CD4-positive, alpha-beta memory T cell (primary cell): ENCODE measurements at regions of chr6 and their contacts with region 1.

Region 1: DNA sequence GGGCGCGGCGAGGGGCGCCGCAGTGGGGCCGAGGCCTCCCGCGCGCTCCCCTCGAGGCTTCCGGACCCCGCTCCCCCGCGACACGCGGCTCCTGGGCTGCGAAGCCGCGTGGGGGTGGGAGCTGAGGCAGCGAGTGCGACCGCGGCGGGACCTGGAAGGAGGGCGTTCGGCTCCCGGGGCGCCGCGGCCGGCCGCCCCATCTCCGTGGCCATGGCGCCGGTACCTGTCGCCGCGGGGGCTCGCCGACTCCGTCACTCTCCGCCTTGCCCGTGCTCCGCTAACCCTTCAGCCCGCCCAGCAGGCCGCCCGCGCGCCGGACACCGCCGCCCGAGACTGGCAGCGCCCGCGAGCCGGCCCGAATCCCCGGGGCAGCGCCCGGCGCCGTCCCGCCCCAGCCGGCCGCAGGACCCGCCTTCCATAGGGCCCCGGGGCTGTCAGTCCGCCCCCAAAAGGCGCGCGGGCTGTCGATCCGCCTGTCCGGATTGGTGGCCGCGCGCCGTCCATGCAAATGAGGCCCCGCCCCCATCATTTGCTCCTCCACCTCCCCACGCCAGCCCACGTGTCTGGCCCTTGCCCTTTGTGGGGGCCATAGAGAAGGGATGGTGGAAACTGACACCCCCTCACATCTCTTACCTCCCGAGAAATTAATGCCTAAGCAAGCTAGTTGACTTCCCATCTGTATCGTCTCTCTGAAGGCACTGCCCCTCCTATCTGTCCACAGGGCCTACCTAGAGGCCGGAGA is at the start of gene FKBP5:
- DNase-seq: peak; percentile 83 to 87 (median 85)
- H3K4me3 ChIP-seq: peak within 1 kb of the TSS; percentile 51 to 99
- H3K4me3 Mint-ChIP-seq: peak within 1 kb of the TSS; percentile 96 to 100 (median 100)
- H3K27ac ChIP-seq: peak within 1 kb of the TSS; percentile 85
- H3K27ac Mint-ChIP-seq: peak within 1 kb of the TSS; percentile 93 to 98 (median 95)
- H3K4me1 ChIP-seq: peaks cover 22% of the 10 kb centered on the region
- H3K4me1 Mint-ChIP-seq: peaks cover 4 to 30% (median 10%) of the 10 kb centered on the region in 4 donors
- H3K27me3 ChIP-seq: no peaks in the 10 kb centered on the region
- H3K27me3 Mint-ChIP-seq: no peaks in the 10 kb centered on the region
- total RNA-seq, gene FKBP5: 72.9 to 74.2 TPM

Region 2: GRCh38 chr6:35435074-35435837 is 253.5 kb before region 1 on chr6:
- CTCF ChIA-PET with region 1: no interaction called
- POLR2A ChIA-PET with region 1: no interaction called
- intact Hi-C with region 1: no loop called
- DNase-seq: no peak
- H3K4me3 ChIP-seq: no peak overlapping the region
- H3K4me3 Mint-ChIP-seq: no peak overlapping the region
- H3K27ac ChIP-seq: no peak overlapping the region
- H3K27ac Mint-ChIP-seq: no peak overlapping the region
- H3K4me1 ChIP-seq: no peaks in the 10 kb centered on the region
- H3K4me1 Mint-ChIP-seq: no peaks in the 10 kb centered on the region
- H3K27me3 ChIP-seq: no peaks in the 10 kb centered on the region
- H3K27me3 Mint-ChIP-seq: no peaks in the 10 kb centered on the region

Region 3: GRCh38 chr6:35583893-35584688 is 104.7 kb before region 1 on chr6:
- CTCF ChIA-PET with region 1: interaction called, 7 read pairs
- POLR2A ChIA-PET with region 1: no interaction called
- intact Hi-C with region 1: loop called (anchors 2 kb)
- DNase-seq: peak; percentile 73 to 78 (median 76)
- H3K4me3 ChIP-seq: no peak overlapping the region
- H3K4me3 Mint-ChIP-seq: peak overlapping the region in 5 of 8 donors; percentile 17 to 63 (median 46)
- H3K27ac ChIP-seq: peak overlapping the region; percentile 12
- H3K27ac Mint-ChIP-seq: peak overlapping the region; percentile 39 to 89 (median 83)
- H3K4me1 ChIP-seq: peaks cover 45% of the 10 kb centered on the region
- H3K4me1 Mint-ChIP-seq: peaks cover 47 to 59% (median 50%) of the 10 kb centered on the region in 4 donors
- H3K27me3 ChIP-seq: no peaks in the 10 kb centered on the region
- H3K27me3 Mint-ChIP-seq: no peaks in the 10 kb centered on the region

Region 4: DNA sequence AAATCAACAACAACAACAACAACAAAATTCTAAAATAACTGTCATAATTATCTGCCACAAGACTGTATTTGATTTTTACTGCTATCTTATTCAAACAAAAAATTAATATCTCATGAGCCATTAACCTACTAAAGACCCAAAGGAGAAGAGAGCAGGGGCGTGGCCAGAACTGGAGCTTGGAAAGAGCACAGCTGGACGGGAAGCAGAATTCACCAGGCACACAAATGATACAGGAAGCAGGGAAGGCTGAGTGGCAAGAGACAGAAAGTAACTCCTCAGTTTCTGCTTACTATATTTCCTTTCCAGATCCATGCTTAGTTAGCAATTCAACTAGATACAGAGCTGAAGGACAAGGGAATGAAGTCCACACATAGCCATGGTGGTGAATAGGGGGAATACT is 54.4 kb before region 1 on chr6:
- CTCF ChIA-PET with region 1: interaction called, 3 read pairs
- POLR2A ChIA-PET with region 1: interaction called, 6 read pairs
- intact Hi-C with region 1: loop called (anchors 5 kb)
- DNase-seq: no peak
- H3K4me3 ChIP-seq: no peak overlapping the region
- H3K4me3 Mint-ChIP-seq: peak overlapping the region in 1 of 8 donors; percentile 14
- H3K27ac ChIP-seq: no peak overlapping the region
- H3K27ac Mint-ChIP-seq: peak overlapping the region; percentile 13 to 89 (median 68)
- H3K4me1 ChIP-seq: peaks cover 37% of the 10 kb centered on the region
- H3K4me1 Mint-ChIP-seq: peaks cover 22 to 57% (median 36%) of the 10 kb centered on the region in 4 donors
- H3K27me3 ChIP-seq: no peaks in the 10 kb centered on the region
- H3K27me3 Mint-ChIP-seq: no peaks in the 10 kb centered on the region

Region 5: DNA sequence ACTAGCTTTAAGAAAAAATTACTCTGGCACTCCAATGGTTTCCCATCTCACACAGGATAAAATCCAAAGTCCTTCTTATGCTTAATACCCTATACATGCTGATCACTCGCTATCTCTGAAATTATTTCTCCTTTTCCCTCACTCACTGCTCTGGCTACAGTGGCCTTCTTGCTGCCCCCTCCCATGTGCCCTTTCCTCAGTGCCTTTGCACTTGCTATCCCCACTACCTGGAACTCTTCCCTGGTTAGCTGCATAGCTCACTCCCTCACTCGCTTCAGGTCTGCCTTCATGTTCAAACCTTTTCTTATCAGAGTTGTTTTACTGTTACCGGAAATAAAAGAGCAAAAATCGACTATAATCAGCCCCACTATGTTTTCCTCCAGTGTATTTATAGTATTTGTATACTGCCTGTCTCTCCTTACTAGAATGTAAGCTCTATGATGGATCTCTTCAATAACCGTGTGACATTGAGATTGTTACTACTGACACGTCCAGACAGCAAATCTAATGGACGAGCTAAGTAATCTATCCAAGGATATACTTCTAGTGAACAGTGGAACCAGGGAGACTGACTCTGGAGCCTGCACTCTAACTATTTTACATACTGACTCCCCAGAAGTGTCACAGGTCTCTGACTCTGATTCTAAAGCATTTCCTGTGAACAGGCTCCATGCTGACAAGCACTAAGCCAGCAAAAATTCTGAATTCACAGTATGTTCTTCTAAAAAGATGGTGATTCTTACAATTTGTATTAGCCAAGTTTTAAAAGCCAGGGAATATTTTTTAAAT is 25.1 kb before region 1 on chr6:
- CTCF ChIA-PET with region 1: interaction called, 5 read pairs
- POLR2A ChIA-PET with region 1: interaction called, 56 read pairs
- intact Hi-C with region 1: no loop called
- DNase-seq: no peak
- H3K4me3 ChIP-seq: peak overlapping the region in 1 of 2 donors; percentile 6
- H3K4me3 Mint-ChIP-seq: no peak overlapping the region
- H3K27ac ChIP-seq: peak overlapping the region; percentile 50
- H3K27ac Mint-ChIP-seq: no peak overlapping the region
- H3K4me1 ChIP-seq: peaks cover 66% of the 10 kb centered on the region
- H3K4me1 Mint-ChIP-seq: peaks cover 12 to 20% (median 17%) of the 10 kb centered on the region in 4 donors
- H3K27me3 ChIP-seq: no peaks in the 10 kb centered on the region
- H3K27me3 Mint-ChIP-seq: no peaks in the 10 kb centered on the region

Region 6: DNA sequence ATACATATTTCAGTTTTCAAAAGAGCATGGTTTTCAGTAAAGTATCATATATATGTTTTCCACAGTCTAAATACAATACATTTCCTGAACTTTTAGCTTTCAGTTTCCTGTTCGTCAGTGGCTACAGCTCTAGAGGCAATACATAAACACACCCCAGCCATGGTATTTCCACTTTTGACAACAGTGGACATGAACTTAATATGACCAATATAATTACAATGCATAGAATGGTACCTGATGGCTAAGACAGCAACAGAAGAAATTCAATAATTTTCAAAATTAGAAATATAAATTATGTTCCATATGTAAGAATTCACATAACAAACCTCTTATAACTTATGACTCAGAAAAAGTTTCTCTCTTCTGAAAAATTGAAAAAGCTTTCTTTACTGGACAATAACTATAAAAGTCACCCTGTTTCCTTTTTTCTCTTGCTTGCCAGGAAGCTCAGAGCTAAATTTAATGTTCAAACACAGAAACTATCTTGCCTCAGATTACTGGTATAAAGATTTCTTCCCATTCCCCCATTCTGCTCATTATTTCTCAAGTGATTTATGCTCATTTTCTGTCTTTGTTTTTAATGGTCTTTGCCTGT is 19.2 kb before region 1 on chr6:
- CTCF ChIA-PET with region 1: interaction called, 10 read pairs
- POLR2A ChIA-PET with region 1: interaction called, 56 read pairs
- intact Hi-C with region 1: loop called (anchors 2 kb)
- DNase-seq: peak in 3 of 5 donors; percentile 25 to 47 (median 26)
- H3K4me3 ChIP-seq: peak overlapping the region; percentile 1 to 12
- H3K4me3 Mint-ChIP-seq: peak overlapping the region; percentile 57 to 92 (median 82)
- H3K27ac ChIP-seq: peak overlapping the region; percentile 52
- H3K27ac Mint-ChIP-seq: peak overlapping the region; percentile 76 to 96 (median 89)
- H3K4me1 ChIP-seq: peaks cover 89% of the 10 kb centered on the region
- H3K4me1 Mint-ChIP-seq: peaks cover 30 to 56% (median 37%) of the 10 kb centered on the region in 4 donors
- H3K27me3 ChIP-seq: no peaks in the 10 kb centered on the region
- H3K27me3 Mint-ChIP-seq: no peaks in the 10 kb centered on the region

Region 7: GRCh38 chr6:35678021-35678654 is 10.6 kb before region 1 on chr6:
- CTCF ChIA-PET with region 1: interaction called, 10 read pairs
- POLR2A ChIA-PET with region 1: interaction called, 14 read pairs
- intact Hi-C with region 1: loop called (anchors 1 kb)
- DNase-seq: no peak
- H3K4me3 ChIP-seq: no peak overlapping the region
- H3K4me3 Mint-ChIP-seq: peak overlapping the region; percentile 22 to 75 (median 43)
- H3K27ac ChIP-seq: no peak overlapping the region
- H3K27ac Mint-ChIP-seq: peak overlapping the region; percentile 39 to 91 (median 81)
- H3K4me1 ChIP-seq: peaks cover 95% of the 10 kb centered on the region
- H3K4me1 Mint-ChIP-seq: peaks cover 67 to 93% (median 79%) of the 10 kb centered on the region in 4 donors
- H3K27me3 ChIP-seq: no peaks in the 10 kb centered on the region
- H3K27me3 Mint-ChIP-seq: no peaks in the 10 kb centered on the region